Thyroid gland (tissue), 4 donors: ENCODE measurements at regions of chr9 and their contacts with region 1.

Region 1: DNA sequence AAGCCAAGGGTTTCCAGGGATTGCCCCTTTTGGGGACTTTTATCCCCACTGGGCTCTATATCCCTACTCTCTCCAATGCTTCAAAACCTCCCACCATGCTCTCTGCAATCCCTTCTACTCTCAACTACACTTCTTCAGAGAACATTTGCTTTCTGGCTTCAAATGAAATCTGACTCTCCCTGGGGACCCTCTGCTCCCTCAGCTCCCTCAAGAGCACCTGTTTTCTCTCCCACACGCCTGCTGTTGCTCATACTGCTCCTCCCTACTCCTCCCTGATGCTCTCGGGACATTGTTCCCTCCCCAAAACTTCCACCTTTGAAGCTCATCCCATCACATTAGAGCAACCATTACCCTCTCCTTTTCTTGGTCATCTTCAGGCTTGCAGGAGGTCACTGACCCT is 344.9 kb downstream of the CDK5RAP2 start:
- DNase-seq: no peak
- H3K4me3 ChIP-seq: no peak overlapping the region
- H3K27ac ChIP-seq: no peak overlapping the region
- H3K4me1 ChIP-seq: no peaks in the 10 kb centered on the region
- H3K27me3 ChIP-seq: no peaks in the 10 kb centered on the region
- CTCF ChIP-seq: no peak
- POLR2A ChIP-seq: no peak

Region 2: DNA sequence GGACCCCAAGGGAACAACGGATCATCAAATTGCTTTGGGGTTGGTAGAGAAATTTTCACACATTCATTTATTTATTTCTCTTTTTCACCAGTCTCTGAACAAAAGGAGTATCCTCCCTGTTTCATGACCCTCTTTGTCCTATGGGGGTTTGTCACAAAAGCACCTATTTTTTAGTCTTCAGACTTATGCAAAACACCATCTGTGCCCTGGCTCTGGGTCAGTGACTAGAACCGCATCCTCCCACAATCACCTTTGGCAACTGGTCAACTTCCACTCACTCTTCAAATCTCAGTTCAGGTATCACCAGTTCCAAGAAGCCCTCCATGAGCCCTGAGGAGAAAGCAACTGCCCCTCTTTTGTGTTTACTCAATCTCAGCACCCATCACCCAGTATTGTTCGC is 50.8 kb before region 1 on chr9:
- intact Hi-C with region 1: loop called (anchors 10 kb)
- DNase-seq: no peak
- H3K4me3 ChIP-seq: no peak overlapping the region
- H3K27ac ChIP-seq: no peak overlapping the region
- H3K4me1 ChIP-seq: no peaks in the 10 kb centered on the region
- H3K27me3 ChIP-seq: no peaks in the 10 kb centered on the region
- CTCF ChIP-seq: no peak
- POLR2A ChIP-seq: no peak

Region 3: DNA sequence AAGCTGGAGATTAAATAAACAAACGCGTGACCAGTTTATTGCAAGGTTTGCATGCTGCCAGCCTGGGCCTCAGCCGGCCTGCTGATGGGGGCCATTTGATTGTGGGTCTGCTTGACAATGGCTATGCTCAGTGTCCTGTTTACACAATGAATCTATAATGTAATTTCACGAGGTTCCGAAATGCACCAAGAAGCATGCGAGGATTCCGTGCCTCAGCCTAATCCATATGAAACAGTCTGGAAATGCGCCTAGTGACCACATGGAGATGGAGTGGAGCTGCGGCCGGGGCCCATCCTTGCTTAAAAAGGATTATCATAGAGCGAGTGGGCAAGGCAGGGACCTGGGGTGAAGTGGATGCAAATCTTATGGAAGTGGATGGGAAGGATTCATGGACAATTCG is 37.5 kb before region 1 on chr9:
- intact Hi-C with region 1: no loop called
- DNase-seq: no peak
- H3K4me3 ChIP-seq: no peak overlapping the region
- H3K27ac ChIP-seq: no peak overlapping the region
- H3K4me1 ChIP-seq: no peaks in the 10 kb centered on the region
- H3K27me3 ChIP-seq: no peaks in the 10 kb centered on the region
- CTCF ChIP-seq: no peak
- POLR2A ChIP-seq: no peak

Region 4: DNA sequence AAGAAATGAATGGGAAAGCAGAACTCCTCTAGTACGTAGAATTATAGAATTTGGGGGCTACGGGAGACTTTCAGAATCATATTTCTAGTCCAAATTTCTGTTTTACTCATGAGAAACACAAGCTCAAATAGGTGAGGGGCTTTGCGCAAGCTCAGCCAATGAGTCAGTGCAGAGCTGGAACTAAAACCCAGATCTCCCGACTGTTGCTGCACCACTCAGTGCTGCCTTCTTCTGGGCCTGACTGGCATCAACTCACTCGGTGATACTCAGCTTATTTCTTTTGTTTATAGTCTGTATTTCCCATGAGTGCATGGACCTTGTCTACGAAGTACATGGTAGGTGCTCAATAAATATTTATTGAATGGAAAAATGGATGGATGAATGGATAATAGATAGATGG is 64.7 kb after region 1 on chr9:
- intact Hi-C with region 1: loop called (anchors 10 kb)
- DNase-seq: no peak
- H3K4me3 ChIP-seq: no peak overlapping the region
- H3K27ac ChIP-seq: no peak overlapping the region
- H3K4me1 ChIP-seq: no peaks in the 10 kb centered on the region
- H3K27me3 ChIP-seq: no peaks in the 10 kb centered on the region
- CTCF ChIP-seq: no peak
- POLR2A ChIP-seq: no peak